ENCODE measurements at regions of chr1 and their contacts with region 1.

Region 1: DNA sequence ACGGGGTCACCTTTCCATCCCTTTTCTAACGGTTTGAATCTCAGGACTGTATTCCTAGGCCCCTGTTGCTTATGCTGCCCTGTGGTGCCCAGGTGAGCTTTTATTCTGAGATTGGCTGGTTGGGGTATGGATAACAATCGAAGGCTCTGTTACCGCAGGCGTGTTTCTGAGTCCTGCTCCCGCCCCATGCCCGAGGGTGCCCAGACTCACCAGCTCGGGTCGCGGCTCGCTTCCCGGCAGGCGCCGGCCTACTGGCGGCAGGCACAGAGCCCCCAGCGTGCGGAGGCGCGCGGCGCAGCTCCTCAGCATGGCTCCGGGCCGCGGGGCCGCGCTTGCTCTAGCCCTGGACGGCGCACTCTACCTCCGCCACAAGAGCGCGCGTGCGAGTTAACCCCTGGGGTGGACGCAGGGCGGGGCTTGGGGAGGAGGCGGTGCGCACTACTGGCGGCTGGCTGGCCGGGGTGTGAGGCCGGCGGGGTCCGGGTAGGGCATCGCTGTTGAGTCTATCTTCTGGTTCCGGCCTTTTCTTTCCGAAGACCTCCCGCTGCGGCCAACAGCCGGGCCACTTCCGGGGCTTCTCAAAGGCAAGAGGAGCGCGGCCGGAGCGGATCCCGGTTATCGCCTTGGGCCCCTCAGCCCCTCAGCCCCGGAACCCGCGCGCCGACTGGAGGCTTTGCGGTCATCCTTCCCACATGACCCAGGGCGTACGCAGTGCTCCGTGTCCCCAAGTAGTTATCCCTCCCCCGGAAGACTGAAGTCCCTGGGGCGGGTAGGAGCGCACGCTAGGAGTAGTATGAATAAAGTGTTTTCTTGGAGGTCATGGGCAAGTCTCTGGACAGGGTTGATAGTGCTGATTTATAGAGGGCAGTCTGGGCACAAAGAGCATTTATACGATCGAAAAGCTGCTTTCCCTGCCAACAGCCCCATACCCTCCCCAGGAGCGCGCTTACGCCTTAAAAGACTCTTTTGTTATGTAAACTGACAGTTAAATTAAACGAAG is at the start of gene THEM4:
- DNase-seq: peak; percentile 95
- H3K4me3 Mint-ChIP-seq: peak within 1 kb of the TSS; percentile 82
- H3K27ac Mint-ChIP-seq: peak within 1 kb of the TSS; percentile 73
- H3K4me1 Mint-ChIP-seq: peaks cover 45% of the 10 kb centered on the region
- H3K27me3 Mint-ChIP-seq: peaks cover 4% of the 10 kb centered on the region
- total RNA-seq, gene THEM4: 26.3 to 28.6 TPM

Region 2: DNA sequence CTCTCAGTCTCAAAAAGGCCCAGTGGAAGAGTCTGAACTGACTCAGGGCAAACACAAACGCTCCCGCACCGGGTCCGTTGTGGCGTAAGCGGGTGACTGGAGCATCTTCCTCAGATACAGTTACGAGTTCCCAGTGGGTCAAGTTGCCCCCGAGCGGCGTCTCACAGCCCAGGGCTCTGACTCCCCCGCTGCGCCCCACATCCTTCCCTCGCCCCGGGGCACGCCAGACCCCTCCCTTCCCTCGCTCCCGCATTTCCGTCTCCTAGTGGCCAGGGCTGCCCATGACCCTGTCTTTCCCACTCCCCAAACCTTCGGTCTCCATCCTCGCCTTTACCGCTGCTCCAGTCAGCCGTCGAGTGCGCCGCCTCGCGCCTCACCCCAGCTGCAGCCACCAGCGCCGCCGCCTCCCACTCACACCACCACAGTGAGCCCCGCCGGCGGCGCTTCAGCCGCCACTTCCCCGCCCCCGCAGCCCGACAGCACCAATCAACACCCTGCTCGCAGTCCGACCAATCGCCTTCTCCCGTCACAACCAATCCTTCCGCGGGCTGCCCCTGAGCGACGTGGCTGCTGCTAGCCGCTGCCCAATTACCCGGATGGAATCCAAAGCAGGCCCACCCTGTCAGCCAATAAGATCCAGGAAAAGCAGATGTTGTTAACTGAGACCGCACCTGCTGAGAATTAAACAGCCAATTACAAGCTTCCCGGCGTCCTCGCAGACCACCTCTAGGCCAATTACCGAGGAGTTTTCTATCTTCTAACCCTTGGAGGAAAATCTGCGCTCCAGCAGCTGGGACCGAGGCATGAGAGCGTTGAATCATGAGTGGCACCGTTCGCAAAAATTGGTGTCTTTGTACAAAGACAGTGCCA is 119.1 kb before region 1 on chr1 and contains the start of gene TDRKH:
- CTCF ChIA-PET with region 1: no interaction called
- POLR2A ChIA-PET with region 1: no interaction called
- DNase-seq: peak; percentile 99
- H3K4me3 Mint-ChIP-seq: peak within 1 kb of the TSS; percentile 88
- H3K27ac Mint-ChIP-seq: peak within 1 kb of the TSS; percentile 66
- H3K4me1 Mint-ChIP-seq: peaks cover 28% of the 10 kb centered on the region
- H3K27me3 Mint-ChIP-seq: no peaks in the 10 kb centered on the region
- total RNA-seq, gene TDRKH: 27.1 to 30.9 TPM

Region 3: GRCh38 chr1:151888972-151889570 is 20.4 kb before region 1 on chr1:
- CTCF ChIA-PET with region 1: interaction called, 18 read pairs
- POLR2A ChIA-PET with region 1: interaction called, 14 read pairs
- DNase-seq: no peak
- H3K4me3 Mint-ChIP-seq: no peak overlapping the region
- H3K27ac Mint-ChIP-seq: no peak overlapping the region
- H3K4me1 Mint-ChIP-seq: peaks cover 27% of the 10 kb centered on the region
- H3K27me3 Mint-ChIP-seq: no peaks in the 10 kb centered on the region

Region 4: GRCh38 chr1:151924679-151925587 is 15.5 kb after region 1 on chr1:
- CTCF ChIA-PET with region 1: interaction called, 5 read pairs
- POLR2A ChIA-PET with region 1: interaction called, 10 read pairs
- DNase-seq: no peak
- H3K4me3 Mint-ChIP-seq: no peak overlapping the region
- H3K27ac Mint-ChIP-seq: peak overlapping the region; percentile 34
- H3K4me1 Mint-ChIP-seq: peaks cover 19% of the 10 kb centered on the region
- H3K27me3 Mint-ChIP-seq: no peaks in the 10 kb centered on the region

Region 5: GRCh38 chr1:151993654-151994496 is 84.4 kb after region 1 on chr1 and contains the start of gene S100A10:
- CTCF ChIA-PET with region 1: interaction called, 4 read pairs
- POLR2A ChIA-PET with region 1: interaction called, 10 read pairs
- DNase-seq: peak; percentile 86
- H3K4me3 Mint-ChIP-seq: peak within 1 kb of the TSS; percentile 91
- H3K27ac Mint-ChIP-seq: peak within 1 kb of the TSS; percentile 98
- H3K4me1 Mint-ChIP-seq: peaks cover 53% of the 10 kb centered on the region
- H3K27me3 Mint-ChIP-seq: no peaks in the 10 kb centered on the region
- total RNA-seq, gene S100A10: 631 to 641 TPM

Region 6: GRCh38 chr1:152034646-152035405 is 125.4 kb after region 1 on chr1:
- CTCF ChIA-PET with region 1: interaction called, 8 read pairs
- POLR2A ChIA-PET with region 1: interaction called, 12 read pairs
- DNase-seq: peak; percentile 74
- H3K4me3 Mint-ChIP-seq: peak overlapping the region; percentile 95
- H3K27ac Mint-ChIP-seq: peak overlapping the region; percentile 95
- H3K4me1 Mint-ChIP-seq: peaks cover 52% of the 10 kb centered on the region
- H3K27me3 Mint-ChIP-seq: no peaks in the 10 kb centered on the region

Region 7: DNA sequence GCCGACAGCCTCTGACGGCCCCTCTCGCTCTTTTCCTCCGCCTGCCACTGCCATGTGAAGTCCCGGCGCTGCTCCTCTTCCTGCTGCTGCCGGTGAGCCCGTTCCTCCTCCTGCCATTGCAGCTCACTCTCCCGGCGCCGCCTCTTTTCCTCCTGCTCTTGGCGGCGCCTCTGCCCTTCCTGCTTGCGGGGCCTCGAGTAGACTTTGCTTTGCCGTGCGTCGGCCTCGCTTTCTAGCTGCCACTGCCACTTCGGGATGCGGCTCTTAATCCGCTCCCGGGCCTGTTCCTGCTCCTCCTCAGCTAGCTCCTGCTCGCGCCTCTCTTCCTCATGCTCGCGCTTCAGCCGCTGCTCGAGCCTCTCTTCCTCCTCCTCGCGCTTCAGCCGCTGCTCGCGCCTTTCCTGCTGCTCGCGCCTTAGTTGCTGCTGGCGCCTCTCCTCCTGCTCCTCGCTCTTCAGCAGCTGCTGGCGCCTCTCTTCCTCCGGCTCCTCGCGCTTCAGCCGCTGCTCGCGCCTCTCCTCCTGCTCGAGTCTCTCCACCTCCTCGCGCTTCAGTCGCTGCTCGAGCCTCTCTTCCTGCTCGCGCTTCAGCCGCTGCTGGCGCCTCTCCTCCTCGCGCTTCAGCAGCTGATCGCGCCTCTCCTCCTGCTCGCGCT is 201.5 kb after region 1 on chr1:
- CTCF ChIA-PET with region 1: no interaction called
- POLR2A ChIA-PET with region 1: no interaction called
- DNase-seq: peak; percentile 45
- H3K4me3 Mint-ChIP-seq: no peak overlapping the region
- H3K27ac Mint-ChIP-seq: no peak overlapping the region
- H3K4me1 Mint-ChIP-seq: peaks cover 7% of the 10 kb centered on the region
- H3K27me3 Mint-ChIP-seq: peaks cover 8% of the 10 kb centered on the region

Measured in activated CD4-positive, alpha-beta memory T cell treated with anti-CD3 and anti-CD28 coated beads, Interleukin-2, amount 10 ng/mL, durations not matched to agents 7 days and 5 days (primary cell).